Calu3 (cell line): ENCODE measurements at regions of chr19 and their contacts with region 1.

Region 1: DNA sequence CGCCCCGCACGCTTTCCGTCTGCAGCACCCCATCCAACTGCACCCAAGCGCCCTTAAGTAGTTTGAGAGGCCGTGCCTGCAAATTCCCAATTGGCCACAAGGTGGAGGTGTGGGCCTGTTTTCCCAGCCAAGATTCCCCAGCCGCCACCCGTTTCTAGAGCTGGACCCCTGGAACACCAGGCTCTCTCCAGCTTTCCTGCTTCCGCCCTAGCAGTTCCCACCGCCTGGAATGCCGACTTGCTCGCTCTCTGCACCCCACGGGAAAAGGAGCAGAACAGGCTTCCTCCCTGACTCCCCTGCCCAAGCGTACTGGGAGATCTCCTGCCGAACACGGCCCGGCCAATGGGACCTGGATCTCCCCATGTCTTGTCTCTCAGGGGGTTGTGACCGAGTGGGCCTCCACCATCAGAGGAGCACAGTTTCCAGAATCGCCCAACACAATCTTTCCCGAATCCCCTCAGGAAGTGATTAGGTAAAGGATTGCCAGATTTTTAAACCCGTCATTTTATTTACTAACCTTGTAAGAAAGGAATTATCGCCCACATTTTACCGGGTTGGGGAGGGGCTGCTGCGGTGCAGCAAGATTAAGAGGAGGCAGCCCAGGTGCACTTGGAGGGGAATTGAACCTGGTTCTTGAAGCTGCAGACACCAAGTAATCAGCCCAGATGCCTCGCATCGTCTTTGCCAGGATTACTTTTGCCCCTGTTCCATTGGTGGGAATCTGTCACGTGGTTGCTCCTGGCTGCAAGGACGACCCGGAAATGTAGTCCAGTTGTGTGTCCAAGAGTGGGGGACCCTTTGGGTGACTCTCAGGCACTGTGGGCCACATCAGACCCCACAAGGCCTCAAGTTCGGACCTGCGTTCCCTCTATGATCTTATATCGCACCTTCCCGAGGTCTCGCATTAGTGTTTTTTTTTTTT is 3.5 kb upstream of the NAPSA start:
- DNase-seq: peak; percentile 89
- H3K4me3 Mint-ChIP-seq: peak overlapping the region; percentile 93
- H3K27ac Mint-ChIP-seq: peak overlapping the region; percentile 55
- H3K4me1 Mint-ChIP-seq: peaks cover 13% of the 10 kb centered on the region
- H3K27me3 Mint-ChIP-seq: no peaks in the 10 kb centered on the region
- CTCF ChIP-seq: peak; percentile 87

Region 2: GRCh38 chr19:50333737-50334617 is 34.9 kb before region 1 on chr19:
- CTCF ChIA-PET with region 1: no interaction called
- intact Hi-C with region 1: no loop called
- DNase-seq: peak; percentile 90
- H3K4me3 Mint-ChIP-seq: peak overlapping the region; percentile 60
- H3K27ac Mint-ChIP-seq: peak overlapping the region; percentile 87
- H3K4me1 Mint-ChIP-seq: peaks cover 56% of the 10 kb centered on the region
- H3K27me3 Mint-ChIP-seq: peaks cover 55% of the 10 kb centered on the region
- CTCF ChIP-seq: no peak

Region 3: DNA sequence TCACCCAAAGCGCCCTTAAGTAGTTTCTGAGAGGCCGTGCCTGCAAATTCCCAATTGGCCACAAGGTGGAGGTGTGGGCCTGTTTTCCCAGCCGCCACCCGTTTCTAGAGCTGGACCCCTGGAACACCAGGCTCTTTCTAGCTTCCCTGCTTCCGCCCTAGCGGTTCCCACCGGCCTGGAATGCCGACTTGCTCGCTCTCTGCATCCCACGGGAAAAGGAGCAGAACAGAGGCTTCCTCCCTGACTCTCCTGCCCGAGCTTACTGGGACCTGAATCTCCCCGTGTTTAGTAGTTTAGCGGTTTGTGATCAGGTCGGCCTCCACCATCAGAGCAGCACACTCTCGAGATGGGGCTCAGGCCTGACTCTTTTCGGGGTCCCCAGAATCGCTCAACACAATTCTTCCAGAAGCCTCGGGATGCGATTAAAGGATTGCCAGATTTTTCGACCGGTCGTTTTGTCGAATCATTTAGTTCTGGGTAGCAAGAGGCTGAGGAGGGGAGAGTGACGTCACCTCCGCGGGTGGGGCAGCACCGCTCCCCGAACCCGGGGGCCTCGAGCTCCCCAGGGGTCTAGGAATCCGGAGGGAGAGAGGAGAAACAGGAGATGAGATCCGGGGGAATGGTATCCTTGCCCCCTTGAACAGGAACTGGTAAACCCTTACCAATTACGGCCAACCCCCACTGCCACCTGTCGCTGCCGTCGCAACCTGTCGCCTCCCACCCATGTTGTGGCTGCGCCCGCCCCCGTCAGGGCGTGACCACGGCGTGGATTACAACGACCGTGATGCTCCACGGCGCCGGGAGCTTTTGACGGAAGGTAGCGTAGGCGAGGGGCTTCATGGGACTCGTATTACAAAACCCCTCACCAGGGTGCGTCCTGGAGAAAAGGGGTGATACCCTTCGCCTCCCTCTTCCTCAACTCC is 11.5 kb before region 1 on chr19:
- CTCF ChIA-PET with region 1: interaction called, 11 read pairs
- intact Hi-C with region 1: no loop called
- DNase-seq: peak; percentile 82
- H3K4me3 Mint-ChIP-seq: peak overlapping the region; percentile 76
- H3K27ac Mint-ChIP-seq: peak overlapping the region; percentile 2
- H3K4me1 Mint-ChIP-seq: no peaks in the 10 kb centered on the region
- H3K27me3 Mint-ChIP-seq: peaks cover 36% of the 10 kb centered on the region
- CTCF ChIP-seq: peak; percentile 98

Region 4: DNA sequence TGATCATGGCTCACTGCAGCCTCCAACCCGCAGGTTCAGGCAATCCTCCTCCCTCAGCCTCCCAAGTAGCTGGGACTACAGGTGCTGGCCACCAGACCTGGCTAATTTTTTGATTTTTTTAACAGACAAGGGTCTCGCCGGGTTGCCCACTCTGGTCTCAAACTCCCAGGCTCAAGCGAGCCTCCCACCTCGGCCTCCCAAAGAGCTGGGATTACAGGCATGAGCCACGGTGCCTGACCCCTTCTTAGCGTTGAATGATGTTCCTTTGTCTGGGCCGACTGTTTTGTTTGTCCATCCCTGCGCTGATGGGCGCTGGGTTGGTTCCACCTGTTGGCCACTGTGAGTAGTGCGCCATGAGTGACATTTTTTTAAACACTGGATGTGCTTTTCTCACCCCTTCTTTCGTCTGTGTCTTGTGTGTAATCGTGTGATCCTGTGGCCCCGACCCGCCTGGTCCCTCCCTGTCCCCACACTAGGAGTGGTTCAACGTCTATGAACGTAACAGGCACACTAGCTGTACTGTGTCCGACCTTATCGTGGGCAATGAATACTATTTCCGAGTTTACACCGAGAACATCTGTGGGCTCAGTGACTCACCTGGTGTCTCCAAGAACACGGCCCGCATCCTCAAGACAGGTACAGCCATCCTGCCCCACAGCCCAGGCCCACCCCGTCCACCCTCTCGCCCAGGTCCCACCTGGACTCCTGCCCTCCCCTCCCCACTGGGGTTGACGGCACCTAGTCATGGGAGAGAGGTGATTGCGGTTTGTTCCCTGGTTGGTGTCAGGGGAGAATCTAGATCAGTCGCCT is 92.4 kb after region 1 on chr19:
- CTCF ChIA-PET with region 1: interaction called, 9 read pairs
- intact Hi-C with region 1: loop called (anchors 2 kb)
- DNase-seq: peak; percentile 75
- H3K4me3 Mint-ChIP-seq: no peak overlapping the region
- H3K27ac Mint-ChIP-seq: no peak overlapping the region
- H3K4me1 Mint-ChIP-seq: peaks cover 7% of the 10 kb centered on the region
- H3K27me3 Mint-ChIP-seq: peaks cover 51% of the 10 kb centered on the region
- CTCF ChIP-seq: peak; percentile 89

Region 5: GRCh38 chr19:50777754-50778303 is 408.9 kb after region 1 on chr19:
- CTCF ChIA-PET with region 1: no interaction called
- intact Hi-C with region 1: loop called (anchors 2 kb)
- DNase-seq: no peak
- H3K4me3 Mint-ChIP-seq: no peak overlapping the region
- H3K27ac Mint-ChIP-seq: no peak overlapping the region
- H3K4me1 Mint-ChIP-seq: peaks cover 19% of the 10 kb centered on the region
- H3K27me3 Mint-ChIP-seq: peaks cover 99% of the 10 kb centered on the region
- CTCF ChIP-seq: no peak